CD8-positive, alpha-beta memory T cell (primary cell): ENCODE measurements at regions of chr14 and their contacts with region 1.

Region 1: DNA sequence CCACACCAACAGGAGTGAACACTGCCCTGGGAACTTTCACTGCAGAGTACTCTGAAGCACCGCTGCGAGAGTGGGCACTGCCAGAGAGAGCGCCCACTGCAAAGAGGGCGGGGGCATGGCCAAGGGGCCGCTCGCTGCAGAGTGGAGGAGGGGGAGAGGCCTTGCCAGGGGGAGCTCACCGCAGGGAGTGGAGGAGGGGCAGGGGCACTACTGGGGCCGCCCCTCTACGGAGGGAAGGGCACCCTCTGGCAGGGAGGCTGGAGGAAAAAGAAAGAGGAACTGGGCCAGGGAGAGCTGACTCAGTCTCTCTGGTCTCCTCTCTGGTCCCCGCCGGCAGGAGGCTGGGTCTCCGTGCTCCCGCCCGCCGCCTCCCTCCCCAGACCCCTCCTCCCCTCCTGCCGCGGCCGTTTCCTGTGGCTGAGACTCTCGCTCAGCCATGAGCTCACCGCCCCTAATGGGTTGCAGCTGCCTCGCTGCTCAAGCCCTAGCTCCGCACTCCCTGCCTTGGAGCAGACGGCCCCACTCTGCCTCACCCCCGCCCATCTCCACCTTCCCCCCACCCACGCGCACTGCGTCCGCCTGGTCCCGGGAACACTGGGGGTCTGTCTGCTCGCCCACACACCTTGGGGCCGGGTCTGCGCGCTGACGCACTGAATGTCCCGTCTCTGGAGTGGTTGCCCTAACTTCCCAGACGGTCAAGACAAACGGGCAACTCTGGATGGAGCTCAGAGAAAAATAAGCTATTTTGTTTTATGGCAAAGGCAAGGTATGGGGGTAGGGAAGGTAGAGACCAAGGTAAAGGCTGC is 1.3 kb downstream of the ARHGEF40 start:
- DNase-seq: peak in 4 of 5 donors; percentile 30 to 70 (median 40)
- H3K4me3 ChIP-seq: peak overlapping the region; percentile 60
- H3K4me3 Mint-ChIP-seq: peak overlapping the region; percentile 81 to 91 (median 86)
- H3K27ac ChIP-seq: peak overlapping the region; percentile 31
- H3K27ac Mint-ChIP-seq: peak overlapping the region in 7 of 8 donors; percentile 56 to 91 (median 88)
- H3K4me1 ChIP-seq: peaks cover 36% of the 10 kb centered on the region
- H3K4me1 Mint-ChIP-seq: peaks cover 23 to 40% (median 29%) of the 10 kb centered on the region in 3 donors
- H3K27me3 ChIP-seq: peaks cover 60% of the 10 kb centered on the region
- H3K27me3 Mint-ChIP-seq: peaks cover 51 to 64% of the 10 kb centered on the region in 2 donors

Region 2: DNA sequence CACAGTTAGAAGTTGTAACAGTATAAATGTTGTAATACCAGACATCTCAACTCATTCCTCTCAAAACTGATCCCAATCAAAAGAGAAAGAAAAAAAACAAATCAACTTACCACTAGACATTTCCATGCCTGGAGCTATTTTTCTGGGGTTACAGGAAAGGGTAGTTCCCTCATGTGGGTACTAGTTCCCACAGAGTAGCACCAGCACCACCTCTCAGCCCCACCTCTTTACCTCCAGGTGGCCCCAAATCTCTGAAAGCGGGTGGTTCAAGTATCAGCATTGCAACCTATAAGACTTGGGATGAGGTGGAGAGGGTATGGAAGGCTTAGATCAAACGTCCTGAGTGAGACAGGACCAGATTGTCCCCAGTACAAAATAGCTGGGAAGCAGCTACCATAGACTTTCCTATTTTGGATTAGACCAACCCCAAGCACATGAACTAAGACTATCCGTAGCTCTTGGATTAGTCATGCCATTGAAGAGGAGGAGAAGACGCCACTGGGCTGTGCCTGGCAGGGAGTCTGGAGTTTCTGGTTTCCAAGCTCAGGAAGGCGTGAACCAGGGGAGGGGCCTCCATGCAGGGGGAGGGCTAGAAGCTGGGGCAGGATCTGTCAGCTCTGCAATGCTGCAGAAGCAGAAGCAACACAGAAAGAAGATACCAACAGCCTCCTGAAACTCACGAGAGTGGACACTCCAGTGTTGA is 72.6 kb before region 1 on chr14 and contains the start of gene SLC39A2:
- CTCF ChIA-PET with region 1: no interaction called
- POLR2A ChIA-PET with region 1: no interaction called
- DNase-seq: no peak
- H3K4me3 ChIP-seq: no peak within 1 kb of the TSS
- H3K4me3 Mint-ChIP-seq: no peak within 1 kb of the TSS
- H3K27ac ChIP-seq: no peak within 1 kb of the TSS
- H3K27ac Mint-ChIP-seq: peak within 1 kb of the TSS in 4 of 8 donors; percentile 24 to 85 (median 30)
- H3K4me1 ChIP-seq: peaks cover 7% of the 10 kb centered on the region
- H3K4me1 Mint-ChIP-seq: peaks cover 0 to 1% (median 0%) of the 10 kb centered on the region in 3 donors
- H3K27me3 ChIP-seq: no peaks in the 10 kb centered on the region
- H3K27me3 Mint-ChIP-seq: peaks cover 0 to 2% of the 10 kb centered on the region in 2 donors
- total RNA-seq, gene SLC39A2: 0.16 TPM in 1 of 2 experiments, not detected in the other

Region 3: GRCh38 chr14:21057803-21058675 is 13.4 kb before region 1 on chr14 and contains the start of gene RNASE8:
- CTCF ChIA-PET with region 1: interaction called, 14 read pairs
- POLR2A ChIA-PET with region 1: no interaction called
- DNase-seq: no peak
- H3K4me3 ChIP-seq: no peak within 1 kb of the TSS
- H3K4me3 Mint-ChIP-seq: no peak within 1 kb of the TSS
- H3K27ac ChIP-seq: no peak within 1 kb of the TSS
- H3K27ac Mint-ChIP-seq: no peak within 1 kb of the TSS
- H3K4me1 ChIP-seq: no peaks in the 10 kb centered on the region
- H3K4me1 Mint-ChIP-seq: no peaks in the 10 kb centered on the region
- H3K27me3 ChIP-seq: peaks cover under 1% of the 10 kb centered on the region
- H3K27me3 Mint-ChIP-seq: peaks cover 8 to 23% of the 10 kb centered on the region in 2 donors
- total RNA-seq, gene RNASE8: not detected

Region 4: DNA sequence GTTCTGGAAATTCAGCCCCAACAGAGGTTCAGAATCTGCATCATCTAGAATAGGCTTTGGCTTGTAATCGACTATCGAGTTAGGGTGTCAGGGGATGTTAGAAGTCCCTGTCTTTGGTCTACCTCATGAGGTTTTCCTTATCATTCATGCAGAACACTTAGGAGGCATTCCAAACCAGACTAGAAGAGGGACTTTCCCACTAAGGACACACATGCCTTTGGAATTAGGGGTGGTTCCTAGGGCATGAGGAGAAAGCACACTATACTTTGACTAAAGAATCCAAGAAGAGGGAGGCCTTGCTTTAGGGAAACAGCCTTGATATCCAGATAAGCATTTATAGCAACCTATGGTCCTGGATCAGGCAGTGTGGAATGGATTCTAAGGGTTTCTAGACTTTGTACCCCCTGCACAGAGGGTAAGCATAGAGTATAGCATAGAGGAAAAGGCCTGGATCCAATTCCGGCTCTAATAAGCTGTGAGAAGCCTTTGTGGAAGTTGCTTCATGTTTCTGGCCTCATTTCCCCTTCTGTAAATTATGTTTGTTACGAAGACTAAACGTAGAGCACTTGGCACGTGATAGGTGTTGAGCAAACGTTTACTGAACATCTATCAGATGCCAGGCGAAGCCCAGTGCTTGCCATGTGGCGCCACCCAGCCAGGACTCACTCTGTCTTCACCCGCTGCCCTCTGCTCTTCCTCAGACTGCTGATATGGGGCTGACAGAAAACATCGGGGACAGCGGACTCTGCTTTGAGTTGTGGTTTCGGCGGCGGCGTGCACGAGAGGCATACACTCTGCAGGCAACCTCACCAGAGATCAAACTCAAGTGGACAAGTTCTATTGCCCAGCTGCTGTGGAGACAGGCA is 13.8 kb after region 1 on chr14:
- CTCF ChIA-PET with region 1: interaction called, 14 read pairs
- POLR2A ChIA-PET with region 1: interaction called, 7 read pairs
- DNase-seq: no peak
- H3K4me3 ChIP-seq: no peak overlapping the region
- H3K4me3 Mint-ChIP-seq: peak overlapping the region in 1 of 7 donors; percentile 34
- H3K27ac ChIP-seq: no peak overlapping the region
- H3K27ac Mint-ChIP-seq: peak overlapping the region in 7 of 8 donors; percentile 20 to 97 (median 65)
- H3K4me1 ChIP-seq: peaks cover 18% of the 10 kb centered on the region
- H3K4me1 Mint-ChIP-seq: peaks cover 19 to 29% (median 28%) of the 10 kb centered on the region in 3 donors
- H3K27me3 ChIP-seq: no peaks in the 10 kb centered on the region
- H3K27me3 Mint-ChIP-seq: peaks cover 3 to 4% of the 10 kb centered on the region in 2 donors

Region 5: GRCh38 chr14:21092273-21093011 is 21.0 kb after region 1 on chr14:
- CTCF ChIA-PET with region 1: interaction called, 68 read pairs
- POLR2A ChIA-PET with region 1: interaction called, 7 read pairs
- DNase-seq: peak; percentile 86 to 93 (median 88)
- H3K4me3 ChIP-seq: no peak overlapping the region
- H3K4me3 Mint-ChIP-seq: no peak overlapping the region
- H3K27ac ChIP-seq: no peak overlapping the region
- H3K27ac Mint-ChIP-seq: peak overlapping the region in 7 of 8 donors; percentile 52 to 94 (median 86)
- H3K4me1 ChIP-seq: peaks cover 9% of the 10 kb centered on the region
- H3K4me1 Mint-ChIP-seq: peaks cover 19 to 34% (median 23%) of the 10 kb centered on the region in 3 donors
- H3K27me3 ChIP-seq: no peaks in the 10 kb centered on the region
- H3K27me3 Mint-ChIP-seq: no peaks in the 10 kb centered on the region

Region 6: GRCh38 chr14:21098076-21098891 is 26.9 kb after region 1 on chr14 and contains the start of gene ZNF219:
- CTCF ChIA-PET with region 1: interaction called, 130 read pairs
- POLR2A ChIA-PET with region 1: interaction called, 10 read pairs
- DNase-seq: peak; percentile 27 to 65 (median 45)
- H3K4me3 ChIP-seq: peak within 1 kb of the TSS; percentile 58
- H3K4me3 Mint-ChIP-seq: peak within 1 kb of the TSS; percentile 79 to 93 (median 86)
- H3K27ac ChIP-seq: no peak within 1 kb of the TSS
- H3K27ac Mint-ChIP-seq: peak within 1 kb of the TSS; percentile 86 to 95 (median 92)
- H3K4me1 ChIP-seq: peaks cover 11% of the 10 kb centered on the region
- H3K4me1 Mint-ChIP-seq: peaks cover 17 to 19% (median 19%) of the 10 kb centered on the region in 3 donors
- H3K27me3 ChIP-seq: no peaks in the 10 kb centered on the region
- H3K27me3 Mint-ChIP-seq: peaks cover 12 to 14% of the 10 kb centered on the region in 2 donors
- total RNA-seq, gene ZNF219: 7.0 to 8.2 TPM

Region 7: DNA sequence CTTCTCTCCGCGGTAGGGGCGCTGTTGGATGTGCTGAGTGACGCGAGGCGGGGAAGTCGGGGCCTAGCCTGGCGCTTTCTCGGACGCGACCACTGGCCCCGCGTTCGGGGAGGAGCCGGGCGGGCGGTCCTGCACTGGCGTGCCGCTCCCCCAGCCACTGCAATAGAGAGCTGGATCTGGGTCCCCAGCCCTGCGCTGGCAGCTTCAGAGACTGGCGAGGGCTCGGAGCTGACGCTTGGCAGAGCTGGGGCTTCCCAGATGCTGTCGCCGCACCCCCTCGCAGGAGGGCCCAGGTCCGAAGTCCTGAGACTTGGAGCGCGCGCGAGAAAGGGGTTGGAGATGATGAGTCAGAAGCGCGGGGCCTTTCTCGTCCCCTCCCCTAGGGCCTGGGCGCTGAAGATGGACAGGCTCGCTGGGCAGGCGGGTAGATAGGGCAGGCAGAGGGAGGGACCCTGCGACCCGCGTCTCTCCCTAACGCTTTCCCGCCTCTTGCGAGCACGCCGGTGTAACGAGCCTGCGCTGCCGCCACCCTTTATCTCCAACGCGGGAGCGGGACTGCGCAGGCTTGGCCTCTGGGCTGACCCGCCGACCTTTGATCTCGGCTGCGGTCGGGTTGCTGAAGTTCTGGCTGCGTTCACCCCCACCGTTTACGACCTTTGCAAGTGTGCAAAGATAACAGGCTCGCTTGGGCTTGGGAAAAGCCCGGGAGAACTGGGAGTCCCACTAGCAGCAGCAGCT is 32.5 kb after region 1 on chr14:
- CTCF ChIA-PET with region 1: interaction called, 130 read pairs
- POLR2A ChIA-PET with region 1: interaction called, 10 read pairs
- DNase-seq: peak; percentile 87 to 95 (median 91)
- H3K4me3 ChIP-seq: peak overlapping the region; percentile 99
- H3K4me3 Mint-ChIP-seq: peak overlapping the region; percentile 79 to 96 (median 88)
- H3K27ac ChIP-seq: peak overlapping the region; percentile 98
- H3K27ac Mint-ChIP-seq: peak overlapping the region; percentile 82 to 99 (median 93)
- H3K4me1 ChIP-seq: peaks cover 22% of the 10 kb centered on the region
- H3K4me1 Mint-ChIP-seq: peaks cover 19 to 31% (median 22%) of the 10 kb centered on the region in 3 donors
- H3K27me3 ChIP-seq: no peaks in the 10 kb centered on the region
- H3K27me3 Mint-ChIP-seq: peaks cover 11% of the 10 kb centered on the region in 2 donors